ENCODE measurements at regions of chr3 and their contacts with region 1.

Region 1: GRCh38 chr3:170908235-170909116 is at the start of gene EIF5A2:
- DNase-seq: peak; percentile 81 to 85
- H3K4me3 ChIP-seq: peak within 1 kb of the TSS; percentile 81
- H3K27ac ChIP-seq: peak within 1 kb of the TSS; percentile 86
- H3K4me1 ChIP-seq: peaks cover 32% of the 10 kb centered on the region
- H3K27me3 ChIP-seq: no peaks in the 10 kb centered on the region
- CTCF ChIP-seq: no peak
- total RNA-seq, gene EIF5A2: 12.4 and 19.8 TPM in 2 replicates

Region 2: DNA sequence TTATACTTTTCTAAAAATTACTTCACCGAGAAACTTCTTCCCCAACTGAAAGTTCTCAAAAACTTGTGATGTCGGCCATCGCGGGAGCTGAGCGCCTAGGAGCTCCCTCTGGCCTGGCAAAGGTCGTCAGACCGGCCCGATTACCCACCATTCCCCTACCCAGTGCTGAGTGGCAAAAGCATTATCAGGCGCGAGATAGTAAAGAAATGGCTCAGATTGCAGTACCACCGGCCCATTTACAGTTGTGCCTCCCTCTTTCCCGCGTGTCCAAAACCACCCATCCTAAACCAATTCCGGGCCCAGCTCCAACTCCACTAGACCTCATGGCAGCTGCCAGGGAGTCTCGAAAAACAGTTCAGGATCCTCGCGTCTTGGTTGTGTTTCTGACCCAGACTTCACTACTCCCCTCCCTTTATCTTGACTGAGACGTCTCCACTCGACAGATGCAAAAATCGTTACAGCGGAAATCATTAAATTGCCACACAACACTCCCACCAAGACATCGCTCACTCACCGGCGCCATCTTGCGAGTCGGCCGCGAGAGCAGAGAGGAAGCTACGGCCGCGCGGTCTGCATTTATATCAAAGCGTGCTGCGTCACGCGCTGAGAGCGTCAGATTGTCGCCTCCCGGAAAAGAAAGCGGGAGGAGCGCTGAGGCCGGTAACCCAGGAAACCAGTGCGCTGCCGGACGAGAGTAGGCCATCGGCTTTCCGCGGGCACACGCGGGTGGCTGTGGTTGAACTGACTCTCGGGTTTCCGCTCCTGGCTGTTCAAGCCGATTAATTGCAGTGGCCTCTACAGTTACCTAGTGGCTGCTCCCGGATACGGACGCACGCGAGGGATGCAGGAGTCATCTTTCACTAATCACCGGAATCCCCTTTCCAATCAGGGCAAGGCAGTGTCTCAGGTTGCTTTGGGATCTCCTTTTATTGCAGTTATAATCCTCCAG is 38.6 kb before region 1 on chr3 and contains the start of gene RPL22L1:
- CTCF ChIA-PET with region 1: no interaction called
- POLR2A ChIA-PET with region 1: interaction called, 4 read pairs
- intact Hi-C with region 1: loop called (anchors 5 kb)
- DNase-seq: peak; percentile 96
- H3K4me3 ChIP-seq: peak within 1 kb of the TSS; percentile 92
- H3K27ac ChIP-seq: peak within 1 kb of the TSS; percentile 94
- H3K4me1 ChIP-seq: peaks cover 35% of the 10 kb centered on the region
- H3K27me3 ChIP-seq: no peaks in the 10 kb centered on the region
- CTCF ChIP-seq: no peak; the same call in 1 of the 2 replicates
- total RNA-seq, gene RPL22L1: 57.3 and 60.3 TPM in 2 replicates